HepG2 (cell line): ENCODE measurements at regions of chr2 and their contacts with region 1.

Region 1: GRCh38 chr2:95389245-95390119 is 13.0 kb upstream of the FAHD2A start:
- DNase-seq: no peak
- ATAC-seq: peak; percentile 38
- H3K4me3 ChIP-seq: peak overlapping the region in 1 of 3 experiments; percentile 34; a peak in 1 of 6 replicates
- H3K27ac ChIP-seq: peak overlapping the region; percentile 60
- H3K4me1 ChIP-seq: peaks cover 65% of the 10 kb centered on the region
- H3K27me3 ChIP-seq: no peaks in the 10 kb centered on the region
- CTCF ChIP-seq: peak; percentile 88
- EP300 ChIP-seq: no peak
- POLR2A ChIP-seq: no peak
- RAD21 ChIP-seq: peak; percentile 86

Region 2: DNA sequence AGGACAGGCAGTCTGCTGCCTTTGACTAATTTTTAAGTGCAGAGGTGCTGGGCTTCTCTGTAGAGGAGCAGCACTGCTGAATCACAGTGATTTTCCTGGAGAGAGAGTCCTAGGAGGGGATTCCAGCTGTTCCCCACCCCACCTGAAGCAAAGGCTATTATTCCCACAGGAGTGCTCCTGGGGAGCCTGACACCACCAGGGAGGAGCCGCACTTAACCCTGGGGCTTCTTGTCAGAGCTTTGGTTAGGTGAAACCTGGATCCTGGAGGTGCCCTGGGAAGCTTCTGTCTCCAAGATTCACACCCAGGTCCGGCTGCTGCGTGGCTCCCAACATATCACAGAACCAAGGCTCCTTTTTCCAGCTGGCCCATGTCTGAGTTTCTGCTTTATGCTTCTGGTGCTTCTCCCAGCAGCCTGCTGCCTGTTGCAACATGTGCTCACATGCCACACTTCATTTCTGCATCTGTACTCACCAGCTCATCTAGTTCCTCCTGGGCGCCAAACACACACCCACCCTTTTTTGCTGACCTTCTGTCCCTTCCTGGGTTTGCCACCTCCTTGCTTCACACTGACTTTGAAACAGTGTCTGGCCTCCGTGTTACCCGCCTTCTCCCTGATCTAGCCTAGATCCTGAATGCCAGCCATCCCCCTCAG is 129.6 kb before region 1 on chr2:
- CTCF ChIA-PET with region 1: no interaction called
- POLR2A ChIA-PET with region 1: no interaction called
- in situ Hi-C with region 1: no loop called
- intact Hi-C with region 1: no loop called
- DNase-seq: no peak
- ATAC-seq: no peak
- H3K4me3 ChIP-seq: no peak overlapping the region
- H3K27ac ChIP-seq: no peak overlapping the region
- H3K4me1 ChIP-seq: no peaks in the 10 kb centered on the region
- H3K27me3 ChIP-seq: peaks cover 0 to 12% of the 10 kb centered on the region in 2 experiments; a peak in 2 of 5 replicates
- CTCF ChIP-seq: no peak
- EP300 ChIP-seq: no peak
- POLR2A ChIP-seq: no peak
- RAD21 ChIP-seq: no peak

Region 3: GRCh38 chr2:95402370-95403203 is 13.1 kb after region 1 on chr2 and contains the start of gene FAHD2A:
- CTCF ChIA-PET with region 1: interaction called, 9 read pairs
- POLR2A ChIA-PET with region 1: interaction called, 110 read pairs
- in situ Hi-C with region 1: no loop called
- intact Hi-C with region 1: no loop called
- DNase-seq: peak; percentile 89
- ATAC-seq: peak; percentile 93
- H3K4me3 ChIP-seq: peak within 1 kb of the TSS; percentile 88 to 99 (median 94)
- H3K27ac ChIP-seq: peak within 1 kb of the TSS; percentile 82
- H3K4me1 ChIP-seq: peaks cover 23% of the 10 kb centered on the region
- H3K27me3 ChIP-seq: no peaks in the 10 kb centered on the region; a peak in 1 of 5 replicates
- CTCF ChIP-seq: peak; percentile 24; the same call in 1 of the 2 replicates
- EP300 ChIP-seq: no peak
- POLR2A ChIP-seq: peak; percentile 84 to 94
- RAD21 ChIP-seq: peak; percentile 59
- total RNA-seq, gene FAHD2A: 44.2 and 48.4 TPM in 2 replicates

Region 4: DNA sequence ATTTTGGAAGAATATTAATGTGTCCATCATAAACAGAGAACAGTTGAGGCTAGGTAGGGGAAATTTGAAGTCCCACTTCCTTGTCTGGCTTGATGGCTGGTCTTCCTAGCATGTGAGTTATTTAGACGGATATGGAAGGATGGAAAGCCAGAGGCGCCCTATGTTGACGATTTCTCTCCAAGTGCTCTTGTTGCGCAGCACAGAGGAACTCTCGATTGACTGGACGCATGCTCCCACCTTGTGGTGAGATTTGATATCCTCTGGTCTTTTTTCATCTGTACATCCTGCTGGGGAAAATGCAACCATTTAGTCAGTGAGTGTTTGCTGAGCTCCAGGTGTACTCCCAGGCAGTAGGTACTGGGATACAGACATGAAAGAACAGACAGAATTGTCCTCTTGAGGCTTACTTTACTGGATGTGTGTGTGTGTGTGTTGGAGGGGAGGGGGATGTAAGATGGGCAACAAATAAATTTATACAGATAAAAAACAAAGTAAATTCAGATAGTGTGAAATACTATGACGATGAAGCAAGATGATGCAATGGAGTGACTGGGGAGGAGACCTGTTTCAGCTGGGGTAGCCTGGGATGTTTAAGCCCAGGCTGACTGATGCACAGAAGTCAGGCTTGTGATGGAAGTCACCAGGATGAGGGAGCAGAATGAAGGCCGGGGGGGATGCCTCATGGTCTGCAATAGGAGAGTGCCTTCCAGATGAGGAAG is 339.6 kb after region 1 on chr2:
- CTCF ChIA-PET with region 1: interaction called, 3 read pairs
- POLR2A ChIA-PET with region 1: no interaction called
- in situ Hi-C with region 1: no loop called
- intact Hi-C with region 1: loop called (anchors 1 kb)
- DNase-seq: peak; percentile 76
- ATAC-seq: peak; percentile 98
- H3K4me3 ChIP-seq: no peak overlapping the region
- H3K27ac ChIP-seq: no peak overlapping the region
- H3K4me1 ChIP-seq: no peaks in the 10 kb centered on the region
- H3K27me3 ChIP-seq: no peaks in the 10 kb centered on the region
- CTCF ChIP-seq: peak; percentile 87
- EP300 ChIP-seq: no peak
- POLR2A ChIP-seq: no peak
- RAD21 ChIP-seq: peak; percentile 75